Breast epithelium (tissue), 4 donors: ENCODE measurements at regions of chr18 and their contacts with region 1.

Region 1: GRCh38 chr18:52569492-52569891 is 229.5 kb downstream of the DCC start:
- DNase-seq: no peak
- H3K4me3 ChIP-seq: no peak overlapping the region
- H3K27ac ChIP-seq: no peak overlapping the region
- H3K4me1 ChIP-seq: no peaks in the 10 kb centered on the region
- H3K27me3 ChIP-seq: no peaks in the 10 kb centered on the region
- CTCF ChIP-seq: no peak
- POLR2A ChIP-seq: no peak

Region 2: DNA sequence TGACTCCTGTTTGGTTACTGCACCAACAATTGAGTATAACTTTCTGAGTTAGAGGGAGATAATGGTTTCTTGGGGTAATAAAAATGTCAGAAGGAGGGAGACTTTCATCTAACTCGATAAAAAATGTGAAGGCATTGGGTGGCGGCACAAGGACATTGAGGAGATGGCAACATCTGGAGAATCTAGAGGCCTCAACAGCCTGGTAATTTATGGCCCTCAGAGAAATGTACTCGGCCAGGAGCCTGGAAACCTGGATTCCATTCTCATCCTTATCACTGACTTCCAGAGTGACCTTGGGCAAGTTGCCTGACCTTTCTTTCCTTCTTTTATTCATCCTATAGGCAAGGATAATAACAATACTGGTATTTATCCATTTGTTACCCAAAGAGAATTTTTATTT is 1198.5 kb before region 1 on chr18:
- intact Hi-C with region 1: no loop called
- DNase-seq: no peak
- H3K4me3 ChIP-seq: no peak overlapping the region
- H3K27ac ChIP-seq: no peak overlapping the region
- H3K4me1 ChIP-seq: no peaks in the 10 kb centered on the region
- H3K27me3 ChIP-seq: no peaks in the 10 kb centered on the region
- CTCF ChIP-seq: no peak
- POLR2A ChIP-seq: no peak

Region 3: GRCh38 chr18:52370841-52371240 is 198.7 kb before region 1 on chr18:
- intact Hi-C with region 1: loop called (anchors 5 kb)
- DNase-seq: no peak
- H3K4me3 ChIP-seq: no peak overlapping the region
- H3K27ac ChIP-seq: no peak overlapping the region
- H3K4me1 ChIP-seq: no peaks in the 10 kb centered on the region
- H3K27me3 ChIP-seq: peaks cover 0 to 8% of the 10 kb centered on the region in 2 donors
- CTCF ChIP-seq: no peak
- POLR2A ChIP-seq: no peak

Region 4: DNA sequence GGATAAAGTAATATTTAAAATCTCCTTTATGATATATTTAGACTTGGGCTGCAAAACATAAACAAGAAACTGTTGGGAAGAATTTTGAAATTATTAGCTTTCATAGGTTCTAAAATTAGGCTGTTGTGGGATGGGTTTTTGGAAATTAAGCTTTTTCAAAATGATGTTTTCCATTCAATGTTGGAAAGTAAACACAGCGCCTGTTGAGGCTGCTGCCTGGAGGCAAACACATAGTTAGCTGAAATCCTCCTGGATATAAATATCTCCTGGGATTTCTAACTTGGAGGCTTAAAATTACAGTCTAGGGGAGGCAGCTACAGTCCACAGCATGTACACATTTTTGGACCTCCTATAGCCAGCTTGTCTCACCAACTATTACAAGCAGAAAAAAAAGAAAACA is 32.2 kb before region 1 on chr18:
- intact Hi-C with region 1: no loop called
- DNase-seq: no peak
- H3K4me3 ChIP-seq: no peak overlapping the region
- H3K27ac ChIP-seq: no peak overlapping the region
- H3K4me1 ChIP-seq: no peaks in the 10 kb centered on the region
- H3K27me3 ChIP-seq: no peaks in the 10 kb centered on the region
- CTCF ChIP-seq: no peak
- POLR2A ChIP-seq: no peak

Region 5: DNA sequence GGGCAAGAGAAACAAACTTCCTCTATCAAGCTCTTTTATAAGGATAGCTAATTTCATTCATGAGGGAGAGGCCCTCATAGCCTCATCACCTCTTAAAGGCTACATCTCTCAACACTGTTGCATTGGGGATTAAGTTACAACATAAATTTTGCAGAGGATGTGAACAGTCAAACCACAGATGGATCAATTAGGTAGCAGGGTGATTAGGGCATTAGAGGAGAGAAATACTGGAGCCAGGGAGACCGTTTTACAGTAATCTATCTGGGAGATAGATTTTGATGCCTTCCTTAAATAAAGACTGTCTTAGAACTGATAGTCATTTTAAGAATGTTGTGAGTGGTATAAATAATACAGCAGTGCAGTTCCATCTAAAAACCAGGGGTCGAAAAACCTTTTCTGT is 29.4 kb after region 1 on chr18:
- intact Hi-C with region 1: no loop called
- DNase-seq: no peak
- H3K4me3 ChIP-seq: no peak overlapping the region
- H3K27ac ChIP-seq: no peak overlapping the region
- H3K4me1 ChIP-seq: no peaks in the 10 kb centered on the region
- H3K27me3 ChIP-seq: no peaks in the 10 kb centered on the region
- CTCF ChIP-seq: no peak
- POLR2A ChIP-seq: no peak